Activated CD4-positive, alpha-beta T cell treated with anti-CD3 and anti-CD28 coated beads for 36 hours (primary cell): ENCODE measurements at regions of chr22 and their contacts with region 1.

Region 1: GRCh38 chr22:38793721-38794466 is at the start of gene DNAL4:
- DNase-seq: peak; percentile 94
- ATAC-seq: peak; percentile 98
- H3K4me3 Mint-ChIP-seq: peak within 1 kb of the TSS; percentile 84
- H3K27ac Mint-ChIP-seq: peak within 1 kb of the TSS; percentile 67
- H3K4me1 Mint-ChIP-seq: peaks cover 26% of the 10 kb centered on the region
- H3K27me3 Mint-ChIP-seq: no peaks in the 10 kb centered on the region
- total RNA-seq, gene DNAL4: 7.4 to 8.0 TPM

Region 2: GRCh38 chr22:38681784-38682335 is 112.0 kb before region 1 on chr22 and contains the start of gene TOMM22:
- CTCF ChIA-PET with region 1: no interaction called
- POLR2A ChIA-PET with region 1: no interaction called
- intact Hi-C with region 1: loop called in 1 of 2 experiments (anchors 1 kb)
- DNase-seq: peak; percentile 92
- ATAC-seq: peak; percentile 98
- H3K4me3 Mint-ChIP-seq: peak within 1 kb of the TSS; percentile 90
- H3K27ac Mint-ChIP-seq: peak within 1 kb of the TSS; percentile 98
- H3K4me1 Mint-ChIP-seq: peaks cover 20% of the 10 kb centered on the region
- H3K27me3 Mint-ChIP-seq: no peaks in the 10 kb centered on the region
- total RNA-seq, gene TOMM22: 146 to 155 TPM

Region 3: DNA sequence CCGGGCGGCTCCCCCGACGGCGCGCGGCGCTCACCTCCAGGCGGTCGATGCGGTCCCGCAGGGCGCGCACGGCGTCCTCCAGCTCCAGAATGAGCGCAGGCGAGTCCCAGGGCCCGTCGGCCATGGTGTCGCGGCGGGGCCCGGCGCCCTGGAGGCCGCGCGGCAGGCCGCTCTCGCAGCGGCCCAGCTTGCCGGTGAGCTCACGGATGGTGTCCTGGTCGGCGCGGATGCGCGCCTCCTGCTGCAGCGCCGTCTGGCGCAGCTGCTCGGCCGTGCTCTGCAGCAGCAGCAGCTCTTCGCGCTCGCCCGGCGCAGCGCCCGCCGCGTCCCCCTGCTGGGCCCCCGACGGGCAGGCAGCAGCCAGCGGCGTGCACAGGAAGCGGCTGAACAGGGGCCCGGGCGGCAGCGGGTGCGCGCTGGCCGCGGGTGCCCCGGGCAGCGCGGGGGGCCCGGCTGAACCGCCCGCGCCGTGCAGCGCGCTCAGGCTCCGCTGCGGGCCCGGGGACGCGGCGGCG is 49.4 kb after region 1 on chr22:
- CTCF ChIA-PET with region 1: interaction called, 3 read pairs
- POLR2A ChIA-PET with region 1: no interaction called
- intact Hi-C with region 1: loop called in 1 of 2 experiments (anchors 1 kb)
- DNase-seq: peak; percentile 79
- ATAC-seq: peak; percentile 92
- H3K4me3 Mint-ChIP-seq: peak overlapping the region; percentile 68
- H3K27ac Mint-ChIP-seq: no peak overlapping the region
- H3K4me1 Mint-ChIP-seq: peaks cover 17% of the 10 kb centered on the region
- H3K27me3 Mint-ChIP-seq: peaks cover 18% of the 10 kb centered on the region

Region 4: GRCh38 chr22:38981992-38982927 is 188.4 kb after region 1 on chr22 and contains the start of gene APOBEC3B:
- CTCF ChIA-PET with region 1: no interaction called
- POLR2A ChIA-PET with region 1: no interaction called
- intact Hi-C with region 1: loop called in 1 of 2 experiments (anchors 1 kb)
- DNase-seq: peak; percentile 82
- ATAC-seq: peak; percentile 57
- H3K4me3 Mint-ChIP-seq: peak within 1 kb of the TSS; percentile 55
- H3K27ac Mint-ChIP-seq: peak within 1 kb of the TSS; percentile 74
- H3K4me1 Mint-ChIP-seq: peaks cover 53% of the 10 kb centered on the region
- H3K27me3 Mint-ChIP-seq: peaks cover 3% of the 10 kb centered on the region
- total RNA-seq, gene APOBEC3B: 8.0 to 8.5 TPM

Region 5: GRCh38 chr22:39021552-39022250 is 227.8 kb after region 1 on chr22:
- CTCF ChIA-PET with region 1: no interaction called
- POLR2A ChIA-PET with region 1: no interaction called
- intact Hi-C with region 1: loop called in 1 of 2 experiments (anchors 5 kb)
- DNase-seq: no peak
- ATAC-seq: no peak
- H3K4me3 Mint-ChIP-seq: peak overlapping the region; percentile 95
- H3K27ac Mint-ChIP-seq: peak overlapping the region; percentile 95
- H3K4me1 Mint-ChIP-seq: peaks cover 53% of the 10 kb centered on the region
- H3K27me3 Mint-ChIP-seq: no peaks in the 10 kb centered on the region

Region 6: DNA sequence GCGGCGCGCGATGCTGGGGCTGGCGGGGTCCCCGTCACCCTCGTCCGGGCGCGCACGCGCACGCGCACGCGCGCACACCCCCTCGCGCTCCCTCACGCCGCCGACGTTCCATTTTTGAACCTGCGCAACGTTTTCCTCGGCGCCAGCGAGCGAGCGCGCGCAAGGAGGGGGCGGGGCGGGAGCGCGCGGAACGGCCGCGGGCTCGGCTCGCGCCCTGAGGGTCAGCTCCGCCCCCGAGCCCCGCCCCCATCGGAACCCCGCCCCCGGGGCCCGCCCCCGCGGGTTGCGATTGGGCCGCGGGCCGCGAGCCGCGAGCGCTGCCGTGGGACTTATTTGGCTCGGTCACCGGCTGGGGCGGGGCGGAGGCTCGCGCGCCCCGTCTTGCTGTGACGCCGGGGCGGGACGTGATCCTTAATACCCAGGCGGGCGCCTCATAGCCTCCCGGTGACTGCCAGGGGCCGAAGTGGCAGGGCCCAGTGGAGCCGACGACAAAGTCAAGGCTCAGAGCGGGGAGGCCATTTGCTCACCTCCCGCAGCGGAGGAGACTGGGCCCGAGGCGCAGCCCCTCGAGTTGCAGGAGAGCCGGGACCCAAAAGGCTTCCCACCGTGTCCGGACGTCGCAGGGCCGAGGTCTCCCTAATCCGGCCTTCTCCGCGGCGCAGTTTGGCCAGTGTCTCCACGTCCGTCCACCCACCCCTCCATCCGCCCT is 358.8 kb after region 1 on chr22 and contains the start of gene CBX7:
- CTCF ChIA-PET with region 1: no interaction called
- POLR2A ChIA-PET with region 1: no interaction called
- intact Hi-C with region 1: loop called in 1 of 2 experiments (anchors 1 kb)
- DNase-seq: peak; percentile 95
- ATAC-seq: peak; percentile 83
- H3K4me3 Mint-ChIP-seq: peak within 1 kb of the TSS; percentile 76
- H3K27ac Mint-ChIP-seq: peak within 1 kb of the TSS; percentile 72
- H3K4me1 Mint-ChIP-seq: peaks cover 40% of the 10 kb centered on the region
- H3K27me3 Mint-ChIP-seq: peaks cover 13% of the 10 kb centered on the region
- total RNA-seq, gene CBX7: 19.9 to 20.3 TPM